ENCODE measurements at regions of chr22 and their contacts with region 1.

Region 1: DNA sequence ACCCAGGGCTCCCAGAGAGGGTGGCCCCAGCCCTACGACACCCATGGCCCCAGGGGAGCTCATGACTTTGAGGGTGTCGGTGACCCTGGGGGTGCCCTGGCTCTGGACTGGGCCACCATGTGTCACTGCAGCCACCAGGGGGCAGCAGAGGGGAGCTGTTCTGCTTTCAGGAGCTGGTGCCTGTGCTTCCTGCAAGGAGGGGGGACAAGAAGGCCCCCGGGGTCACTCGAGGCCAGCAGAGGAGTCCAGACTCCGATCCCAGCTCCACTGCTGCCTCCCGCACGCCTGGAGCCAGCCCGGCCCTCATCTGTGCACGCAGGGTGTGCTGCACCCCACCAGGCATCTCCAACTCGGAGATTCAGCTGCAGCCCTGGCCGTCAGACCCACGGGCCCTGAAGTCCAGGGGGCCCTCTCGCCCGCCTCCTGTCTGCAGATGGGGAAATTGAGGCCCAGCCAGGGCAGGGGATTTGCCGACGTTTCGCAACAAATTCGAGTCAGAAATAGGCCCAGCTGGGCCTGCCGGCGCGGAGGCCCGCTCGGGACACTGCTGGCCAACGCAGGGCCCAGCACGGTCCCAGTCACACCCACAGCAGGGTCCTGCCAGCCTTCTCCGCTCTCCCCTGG is 29.5 kb upstream of the WNT7B start:
- DNase-seq: peak; percentile 65
- H3K4me3 ChIP-seq: no peak overlapping the region
- H3K27ac ChIP-seq: peak overlapping the region; percentile 87
- H3K27me3 ChIP-seq: no peaks in the 10 kb centered on the region
- CTCF ChIP-seq: peak; percentile 91

Region 2: GRCh38 chr22:45994491-45995404 is 11.7 kb before region 1 on chr22:
- CTCF ChIA-PET with region 1: interaction called, 78 read pairs
- POLR2A ChIA-PET with region 1: interaction called, 6 read pairs
- DNase-seq: no peak
- H3K4me3 ChIP-seq: no peak overlapping the region
- H3K27ac ChIP-seq: no peak overlapping the region
- H3K27me3 ChIP-seq: peaks cover 7% of the 10 kb centered on the region
- CTCF ChIP-seq: peak; percentile 94

Region 3: DNA sequence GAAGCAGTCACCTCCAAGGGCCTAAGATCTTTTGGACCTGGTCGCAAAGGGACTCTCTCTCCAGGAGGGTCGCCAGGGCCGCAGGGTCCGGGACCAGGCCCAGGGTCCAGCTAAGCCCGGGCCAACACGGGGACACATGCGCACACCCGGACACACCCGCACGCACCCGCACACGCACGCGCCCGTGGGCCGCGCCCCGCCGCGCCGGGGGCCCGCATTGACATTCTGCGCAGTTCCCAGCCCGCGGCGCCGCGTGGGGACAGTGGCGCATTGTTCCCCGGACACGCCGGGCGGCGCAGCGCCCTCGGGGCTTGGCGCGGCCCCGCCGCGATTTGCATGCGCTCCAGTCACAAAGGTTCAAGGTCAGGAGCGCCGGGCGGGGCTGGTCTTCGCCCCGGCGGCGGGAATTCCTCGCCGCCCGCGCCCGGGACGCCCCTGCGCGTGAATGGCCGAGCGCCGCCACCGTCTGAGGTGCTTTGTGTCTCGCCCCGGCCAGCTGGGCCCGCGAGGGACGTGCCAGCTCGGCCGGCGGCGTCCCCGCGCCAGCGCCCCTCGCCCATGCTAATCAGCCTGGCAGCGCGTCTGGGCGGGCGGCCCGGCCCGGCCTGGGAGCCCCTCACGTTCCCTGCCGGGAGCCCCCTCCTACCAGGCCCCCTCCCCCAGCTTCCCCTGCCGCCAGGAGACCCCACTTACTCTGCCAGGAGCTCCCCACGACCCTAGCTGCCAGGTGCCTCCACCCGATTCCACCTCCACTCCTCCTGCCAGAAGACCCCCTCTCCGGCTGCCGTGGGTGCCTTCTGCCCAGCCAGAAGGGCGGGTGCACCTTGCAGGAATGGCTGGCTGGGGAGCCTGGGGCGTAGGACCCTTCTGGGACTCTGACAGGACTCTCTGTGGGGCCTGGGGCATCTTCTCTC is 21.0 kb after region 1 on chr22:
- CTCF ChIA-PET with region 1: interaction called, 14 read pairs
- POLR2A ChIA-PET with region 1: interaction called, 3 read pairs
- DNase-seq: no peak
- H3K4me3 ChIP-seq: peak overlapping the region; percentile 38; the same call in 1 of the 2 replicates
- H3K27ac ChIP-seq: no peak overlapping the region
- H3K27me3 ChIP-seq: peaks cover 7% of the 10 kb centered on the region
- CTCF ChIP-seq: no peak

Region 4: GRCh38 chr22:46070803-46071450 is 64.4 kb after region 1 on chr22:
- CTCF ChIA-PET with region 1: interaction called, 27 read pairs
- POLR2A ChIA-PET with region 1: interaction called, 10 read pairs
- DNase-seq: no peak
- H3K4me3 ChIP-seq: peak overlapping the region; percentile 86
- H3K27ac ChIP-seq: peak overlapping the region; percentile 94
- H3K27me3 ChIP-seq: no peaks in the 10 kb centered on the region
- CTCF ChIP-seq: no peak

Region 5: GRCh38 chr22:46087336-46088277 is 81.1 kb after region 1 on chr22:
- CTCF ChIA-PET with region 1: interaction called, 29 read pairs
- POLR2A ChIA-PET with region 1: interaction called, 8 read pairs
- DNase-seq: peak; percentile 81
- H3K4me3 ChIP-seq: peak overlapping the region; percentile 36
- H3K27ac ChIP-seq: peak overlapping the region; percentile 94
- H3K27me3 ChIP-seq: no peaks in the 10 kb centered on the region
- CTCF ChIP-seq: no peak

Region 6: GRCh38 chr22:46116491-46116958 is 110.0 kb after region 1 on chr22:
- CTCF ChIA-PET with region 1: interaction called, 91 read pairs
- POLR2A ChIA-PET with region 1: interaction called, 24 read pairs
- DNase-seq: peak; percentile 29
- H3K4me3 ChIP-seq: no peak overlapping the region
- H3K27ac ChIP-seq: peak overlapping the region; percentile 31
- H3K27me3 ChIP-seq: no peaks in the 10 kb centered on the region
- CTCF ChIP-seq: peak; percentile 60